SK-N-SH (cell line): ENCODE measurements at regions of chr2 and their contacts with region 1.

Region 1: GRCh38 chr2:9984217-9984739 is 32.8 kb downstream of the GRHL1 start:
- DNase-seq: peak; percentile 78
- H3K4me3 ChIP-seq: no peak overlapping the region
- H3K27ac ChIP-seq: no peak overlapping the region
- H3K4me1 ChIP-seq: peaks cover 22 to 25% of the 10 kb centered on the region in 2 experiments
- H3K27me3 ChIP-seq: no peaks in the 10 kb centered on the region
- CTCF ChIP-seq: peak; percentile 93
- EP300 ChIP-seq: no peak
- RAD21 ChIP-seq: peak; percentile 89

Region 2: DNA sequence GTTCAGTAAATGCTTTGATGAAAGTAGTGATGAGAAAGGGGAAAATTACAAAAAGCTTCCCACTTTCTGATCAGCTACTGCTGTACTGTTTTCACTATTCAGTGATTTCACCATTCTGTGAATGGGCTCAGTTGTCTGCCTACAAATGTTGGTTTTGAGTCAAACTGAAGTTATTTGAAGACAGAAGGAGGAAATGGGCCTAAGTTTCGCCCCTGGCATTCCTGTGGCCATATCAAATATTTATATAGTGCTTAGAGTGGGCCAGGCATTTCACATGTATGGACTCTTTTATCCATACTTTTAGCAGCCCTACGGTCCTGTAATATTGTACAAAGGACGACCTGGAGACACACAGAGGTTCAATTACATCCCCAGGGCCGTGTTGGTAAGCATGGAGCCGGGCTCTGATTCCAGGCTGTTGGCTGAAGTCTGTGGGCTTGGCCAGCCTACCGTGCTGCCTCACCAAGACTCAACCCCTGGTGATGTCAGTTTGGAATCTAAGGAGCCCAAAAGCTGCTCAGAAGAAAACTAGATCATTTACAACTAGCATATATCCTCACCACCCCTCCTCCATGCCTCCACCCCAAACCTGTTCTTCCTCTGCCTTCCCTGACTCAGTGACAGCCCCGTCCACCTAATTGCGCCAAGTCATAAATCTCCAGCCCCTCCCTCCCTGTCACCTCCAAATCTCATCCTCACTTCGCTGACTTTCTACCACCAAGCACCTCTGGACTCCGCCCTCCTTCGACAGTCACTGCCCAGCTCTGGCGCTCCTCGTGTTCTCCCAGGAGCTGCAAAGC is 42.9 kb before region 1 on chr2:
- CTCF ChIA-PET with region 1: interaction called, 23 read pairs
- POLR2A ChIA-PET with region 1: no interaction called
- DNase-seq: no peak
- H3K4me3 ChIP-seq: no peak overlapping the region
- H3K27ac ChIP-seq: peak overlapping the region in 1 of 2 experiments; percentile 4; a peak in 1 of 4 replicates
- H3K4me1 ChIP-seq: peaks cover 7 to 11% of the 10 kb centered on the region in 2 experiments; a peak in 3 of 4 replicates
- H3K27me3 ChIP-seq: no peaks in the 10 kb centered on the region
- CTCF ChIP-seq: no peak
- EP300 ChIP-seq: no peak
- RAD21 ChIP-seq: no peak

Region 3: DNA sequence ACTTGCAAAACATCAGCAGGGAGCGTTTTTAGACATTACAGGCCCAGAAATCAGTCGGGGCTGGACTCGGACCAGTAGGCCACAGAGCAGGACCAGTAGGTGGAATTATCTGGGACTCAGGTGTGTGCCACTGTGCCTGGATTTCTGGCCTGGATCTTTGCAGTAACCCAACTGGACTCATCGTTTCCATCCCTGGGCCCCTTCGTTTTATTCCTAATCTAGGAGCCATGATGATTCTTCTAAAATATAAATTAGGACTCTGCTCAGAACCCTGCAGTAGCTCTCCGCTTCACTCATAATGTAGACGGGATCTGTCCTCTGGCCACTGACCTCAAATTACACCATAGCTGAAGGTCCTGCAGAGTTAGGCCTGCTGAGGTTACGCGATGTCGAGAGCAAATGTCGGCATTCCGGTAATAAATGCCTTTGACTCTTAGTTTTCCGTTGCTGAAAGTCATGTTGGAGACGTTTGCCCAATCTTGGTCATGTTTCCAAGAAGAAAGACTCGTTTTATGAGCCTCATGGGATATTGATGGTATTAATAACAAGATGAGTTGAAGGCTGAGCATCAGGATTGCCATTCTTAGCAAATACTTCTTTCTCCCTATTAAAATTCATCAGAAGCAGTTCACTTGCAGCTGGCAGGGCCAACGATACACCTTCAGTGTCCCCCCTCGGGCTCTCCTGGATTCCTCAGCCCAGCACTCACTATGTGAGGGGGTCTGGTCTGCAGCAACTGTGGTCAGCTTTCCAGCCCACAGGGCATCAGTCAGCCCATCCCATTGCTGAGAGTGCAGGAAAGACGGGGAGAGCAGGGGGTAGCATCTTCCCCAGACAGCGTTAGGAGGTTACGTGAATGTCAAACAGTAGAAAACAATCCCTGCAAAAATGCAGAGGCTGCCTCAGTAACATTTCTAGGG is 19.2 kb after region 1 on chr2:
- CTCF ChIA-PET with region 1: interaction called, 112 read pairs
- POLR2A ChIA-PET with region 1: no interaction called
- DNase-seq: no peak
- H3K4me3 ChIP-seq: no peak overlapping the region
- H3K27ac ChIP-seq: peak overlapping the region in 1 of 2 experiments; percentile 84; a peak in 2 of 4 replicates
- H3K4me1 ChIP-seq: peaks cover 0 to 53% of the 10 kb centered on the region in 2 experiments; a peak in 2 of 4 replicates
- H3K27me3 ChIP-seq: no peaks in the 10 kb centered on the region
- CTCF ChIP-seq: no peak
- EP300 ChIP-seq: no peak
- RAD21 ChIP-seq: no peak

Region 4: GRCh38 chr2:10028988-10029874 is 45.0 kb after region 1 on chr2:
- CTCF ChIA-PET with region 1: interaction called, 76 read pairs
- POLR2A ChIA-PET with region 1: no interaction called
- DNase-seq: no peak
- H3K4me3 ChIP-seq: no peak overlapping the region
- H3K27ac ChIP-seq: no peak overlapping the region
- H3K4me1 ChIP-seq: peaks cover 0 to 16% of the 10 kb centered on the region in 2 experiments; a peak in 1 of 4 replicates
- H3K27me3 ChIP-seq: no peaks in the 10 kb centered on the region
- CTCF ChIP-seq: no peak
- EP300 ChIP-seq: no peak
- RAD21 ChIP-seq: no peak

Region 5: DNA sequence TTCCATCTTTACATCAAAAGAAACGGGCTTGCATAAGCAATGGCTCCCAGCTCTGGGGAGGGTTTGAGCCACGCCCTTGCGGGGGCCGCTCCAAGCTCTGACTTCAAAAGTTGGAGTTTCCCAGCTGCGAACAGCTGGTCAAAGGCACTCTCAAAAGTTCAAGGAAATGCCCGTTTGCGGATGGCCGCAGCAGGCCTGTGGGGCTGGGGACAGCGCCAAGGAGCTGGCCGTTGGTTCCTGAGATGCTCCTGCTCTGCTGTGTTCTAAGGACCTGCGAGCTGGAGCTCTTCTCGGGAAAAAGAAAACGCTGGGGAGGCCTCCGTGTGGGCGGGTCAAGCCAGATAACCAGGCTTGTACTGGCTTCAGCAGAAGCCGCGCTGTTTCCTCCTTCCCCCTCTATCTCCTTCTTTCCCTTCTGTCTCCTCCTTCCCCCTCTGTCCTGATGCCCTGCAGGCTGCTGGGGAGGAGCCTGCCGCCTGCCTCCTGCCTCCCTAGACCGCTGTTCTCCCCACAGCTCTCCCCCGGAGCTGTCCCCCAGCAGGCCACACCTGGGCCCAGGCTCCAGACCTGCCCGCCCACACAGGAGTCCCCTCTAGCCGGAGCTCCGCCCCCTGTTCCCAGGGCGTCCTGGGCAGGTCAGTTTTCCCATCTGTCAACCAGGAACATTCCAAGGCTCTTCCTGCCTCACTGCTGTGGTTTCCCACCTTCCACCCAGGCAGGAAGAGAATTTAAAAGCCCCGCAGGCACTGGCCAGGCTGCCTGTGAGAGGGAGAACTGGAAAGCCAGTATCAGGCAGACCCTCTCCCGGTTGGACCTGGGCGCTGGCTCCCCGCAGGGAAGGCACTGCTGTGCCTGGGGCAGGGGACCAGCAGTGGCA is 73.2 kb after region 1 on chr2:
- CTCF ChIA-PET with region 1: interaction called, 357 read pairs
- POLR2A ChIA-PET with region 1: no interaction called
- DNase-seq: peak; percentile 58
- H3K4me3 ChIP-seq: no peak overlapping the region
- H3K27ac ChIP-seq: no peak overlapping the region
- H3K4me1 ChIP-seq: peaks cover 0 to 23% of the 10 kb centered on the region in 2 experiments; a peak in 1 of 4 replicates
- H3K27me3 ChIP-seq: no peaks in the 10 kb centered on the region
- CTCF ChIP-seq: no peak
- EP300 ChIP-seq: no peak
- RAD21 ChIP-seq: no peak

Region 6: GRCh38 chr2:10097352-10098148 is 113.3 kb after region 1 on chr2:
- CTCF ChIA-PET with region 1: interaction called, 14 read pairs
- POLR2A ChIA-PET with region 1: no interaction called
- DNase-seq: peak; percentile 91
- H3K4me3 ChIP-seq: no peak overlapping the region
- H3K27ac ChIP-seq: no peak overlapping the region
- H3K4me1 ChIP-seq: peaks cover 0 to 13% of the 10 kb centered on the region in 2 experiments; a peak in 1 of 4 replicates
- H3K27me3 ChIP-seq: no peaks in the 10 kb centered on the region
- CTCF ChIP-seq: peak; percentile 96
- EP300 ChIP-seq: no peak
- RAD21 ChIP-seq: peak; percentile 83